ENCODE measurements at regions of chr1 and their contacts with region 1.

Region 1: DNA sequence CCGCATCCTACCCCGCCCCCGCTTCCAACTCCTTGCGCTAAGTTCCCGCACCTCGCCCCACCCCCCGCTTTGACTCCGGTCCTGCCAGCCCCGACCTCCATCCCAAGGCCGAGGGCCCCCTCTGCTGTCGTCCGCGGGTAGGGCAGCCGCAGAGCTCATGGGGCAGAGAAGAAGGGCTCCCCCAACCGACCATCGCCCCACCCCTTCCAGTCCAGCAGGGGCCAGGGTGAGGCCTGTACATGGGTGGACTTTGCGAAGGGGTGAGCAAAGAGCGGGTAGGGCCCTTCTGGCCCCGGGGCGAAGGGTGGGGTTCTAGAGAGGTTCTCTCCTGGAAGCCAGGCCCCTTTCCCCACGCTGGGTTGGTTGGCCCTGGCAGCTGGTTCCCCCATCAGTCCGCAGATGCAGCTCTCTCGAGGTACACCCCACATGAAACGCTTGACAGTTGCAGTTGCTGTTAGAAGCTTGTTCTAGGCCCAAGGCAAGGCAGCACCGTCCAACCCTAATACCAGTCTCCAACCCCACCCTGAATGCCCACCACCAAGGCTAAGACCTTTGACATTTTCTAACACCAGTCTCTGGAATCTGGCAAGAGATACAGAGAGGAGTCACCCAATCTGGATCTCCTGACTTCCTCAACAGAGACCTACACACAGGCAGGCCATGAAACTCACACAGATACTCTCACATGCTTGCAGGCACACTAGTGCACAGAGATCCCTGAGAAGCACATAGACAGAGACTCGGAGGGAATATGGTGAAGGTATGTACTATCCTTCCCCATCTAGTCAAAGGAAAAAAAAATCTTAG is 25.3 kb upstream of the ADGRB2 start:
- DNase-seq: peak; percentile 91
- H3K4me3 ChIP-seq: peak overlapping the region; percentile 4 to 78 (median 55)
- H3K27ac ChIP-seq: no peak overlapping the region
- H3K4me1 ChIP-seq: peaks cover 4% of the 10 kb centered on the region
- H3K27me3 ChIP-seq: no peaks in the 10 kb centered on the region
- CTCF ChIP-seq: peak; percentile 70 to 93
- POLR2A ChIP-seq: peak; percentile 32

Region 2: GRCh38 chr1:31394628-31395193 is 394.8 kb before region 1 on chr1:
- CTCF ChIA-PET with region 1: interaction called, 8 read pairs
- POLR2A ChIA-PET with region 1: no interaction called
- dilution Hi-C with region 1: no loop called
- intact Hi-C with region 1: loop called (anchors 10 kb)
- DNase-seq: peak; percentile 71
- H3K4me3 ChIP-seq: no peak overlapping the region
- H3K27ac ChIP-seq: no peak overlapping the region
- H3K4me1 ChIP-seq: peaks cover 5% of the 10 kb centered on the region
- H3K27me3 ChIP-seq: no peaks in the 10 kb centered on the region
- CTCF ChIP-seq: peak; percentile 90 to 96
- POLR2A ChIP-seq: no peak

Region 3: GRCh38 chr1:31587720-31588394 is 201.6 kb before region 1 on chr1:
- CTCF ChIA-PET with region 1: interaction called, 10 read pairs
- POLR2A ChIA-PET with region 1: no interaction called
- dilution Hi-C with region 1: no loop called
- intact Hi-C with region 1: loop called (anchors 2 kb)
- DNase-seq: peak; percentile 86
- H3K4me3 ChIP-seq: no peak overlapping the region
- H3K27ac ChIP-seq: peak overlapping the region; percentile 92
- H3K4me1 ChIP-seq: peaks cover 39% of the 10 kb centered on the region
- H3K27me3 ChIP-seq: no peaks in the 10 kb centered on the region
- CTCF ChIP-seq: peak; percentile 71 to 92
- POLR2A ChIP-seq: peak; percentile 81

Region 4: DNA sequence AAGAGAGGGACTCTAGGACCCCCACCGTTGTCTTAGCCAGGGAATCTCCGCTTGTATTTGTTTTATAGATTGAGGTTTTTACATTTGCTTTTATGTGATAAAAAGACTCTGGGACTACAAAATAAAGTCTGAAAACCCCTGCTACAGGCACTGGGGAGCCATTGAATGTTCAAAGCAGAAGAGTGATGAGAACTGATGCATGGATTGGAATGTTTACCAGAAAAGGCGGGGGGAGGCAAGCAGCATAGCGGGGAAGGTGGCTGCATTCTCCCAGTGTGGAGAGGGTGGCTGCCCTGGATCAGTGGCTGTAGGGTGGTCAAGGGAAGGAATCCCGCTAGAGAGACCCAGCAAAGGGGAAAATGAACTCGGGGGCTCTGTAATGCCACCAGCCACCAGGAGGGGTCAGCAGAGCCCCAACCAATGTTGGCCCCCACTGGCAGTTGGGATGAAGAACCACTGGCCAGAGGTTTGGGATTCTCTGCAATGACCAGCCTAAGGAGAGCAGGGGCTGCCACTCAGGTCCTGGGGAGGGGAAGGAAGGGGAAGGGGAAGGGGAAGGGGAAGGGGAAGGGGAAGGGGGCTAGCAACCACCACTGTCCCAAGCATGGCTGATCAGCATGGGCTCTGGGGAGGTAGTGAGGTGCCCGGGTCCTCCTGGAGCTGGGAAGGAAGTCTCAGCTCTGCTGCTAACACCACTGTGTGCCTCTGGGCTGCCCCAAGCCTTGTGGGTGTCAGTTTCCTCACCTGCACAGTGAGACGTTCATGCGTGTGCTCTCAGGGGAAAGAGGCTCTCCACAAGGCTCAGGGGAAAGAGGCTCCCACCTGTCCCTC is 125.6 kb before region 1 on chr1:
- CTCF ChIA-PET with region 1: interaction called, 76 read pairs
- POLR2A ChIA-PET with region 1: interaction called, 3 read pairs
- dilution Hi-C with region 1: no loop called
- intact Hi-C with region 1: loop called (anchors 1 kb)
- DNase-seq: peak; percentile 48
- H3K4me3 ChIP-seq: no peak overlapping the region
- H3K27ac ChIP-seq: no peak overlapping the region
- H3K4me1 ChIP-seq: no peaks in the 10 kb centered on the region
- H3K27me3 ChIP-seq: no peaks in the 10 kb centered on the region
- CTCF ChIP-seq: peak; percentile 86 to 90
- POLR2A ChIP-seq: no peak

Region 5: DNA sequence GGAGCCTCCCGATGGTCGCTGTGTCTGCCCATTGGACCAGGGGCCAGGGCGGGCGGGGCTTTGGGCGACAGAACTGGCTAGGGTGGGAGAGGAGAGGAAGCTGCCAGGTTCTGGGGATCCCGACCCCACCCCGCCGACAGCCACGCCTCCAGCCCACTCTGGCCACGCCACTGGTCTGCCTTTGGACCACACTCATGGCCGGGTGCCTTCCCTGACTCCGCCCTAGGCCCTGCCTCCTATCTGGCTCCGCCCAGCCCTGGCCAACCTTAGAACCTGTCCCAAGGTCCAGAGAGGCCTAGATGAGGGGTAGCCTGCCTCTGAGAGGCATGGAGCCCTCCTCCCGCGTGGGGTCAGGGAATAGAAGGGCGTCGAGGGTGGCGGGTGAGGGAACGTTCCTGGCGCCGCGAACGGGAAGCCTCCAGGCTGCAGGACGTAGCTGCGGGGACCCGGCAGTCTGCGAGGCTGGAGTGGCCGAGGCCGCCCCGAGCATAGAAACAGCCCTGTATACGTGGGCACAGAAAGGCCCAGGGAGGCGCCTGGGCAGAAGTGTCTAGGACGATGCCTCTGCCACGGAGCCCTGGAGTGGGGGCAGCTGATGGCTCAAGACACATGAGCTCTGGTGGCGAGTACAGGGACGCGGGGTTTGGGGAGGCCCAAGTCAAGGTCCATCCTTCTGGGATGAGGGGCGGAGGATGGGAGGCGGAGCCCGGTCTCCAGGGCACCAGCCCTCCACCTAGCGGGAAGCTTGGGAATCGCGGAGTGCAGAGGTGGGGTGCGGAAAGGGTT is 74.2 kb before region 1 on chr1:
- CTCF ChIA-PET with region 1: interaction called, 50 read pairs
- POLR2A ChIA-PET with region 1: no interaction called
- dilution Hi-C with region 1: no loop called
- intact Hi-C with region 1: loop called (anchors 1 kb)
- DNase-seq: peak; percentile 92
- H3K4me3 ChIP-seq: peak overlapping the region in 2 of 3 experiments; percentile 9 to 27
- H3K27ac ChIP-seq: peak overlapping the region; percentile 62
- H3K4me1 ChIP-seq: peaks cover 24% of the 10 kb centered on the region
- H3K27me3 ChIP-seq: peaks cover 0 to 18% of the 10 kb centered on the region in 2 experiments
- CTCF ChIP-seq: peak; percentile 86 to 96
- POLR2A ChIP-seq: no peak

Region 6: GRCh38 chr1:31769720-31770390 is 19.6 kb before region 1 on chr1:
- CTCF ChIA-PET with region 1: interaction called, 102 read pairs
- POLR2A ChIA-PET with region 1: no interaction called
- dilution Hi-C with region 1: no loop called
- intact Hi-C with region 1: loop called (anchors 1 kb)
- DNase-seq: no peak
- H3K4me3 ChIP-seq: no peak overlapping the region
- H3K27ac ChIP-seq: no peak overlapping the region
- H3K4me1 ChIP-seq: peaks cover 3% of the 10 kb centered on the region
- H3K27me3 ChIP-seq: peaks cover 41 to 44% of the 10 kb centered on the region in 2 experiments
- CTCF ChIP-seq: no peak
- POLR2A ChIP-seq: no peak

Region 7: GRCh38 chr1:31880890-31881687 is 91.6 kb after region 1 on chr1:
- CTCF ChIA-PET with region 1: no interaction called
- POLR2A ChIA-PET with region 1: no interaction called
- dilution Hi-C with region 1: no loop called
- intact Hi-C with region 1: no loop called
- DNase-seq: no peak
- H3K4me3 ChIP-seq: no peak overlapping the region
- H3K27ac ChIP-seq: no peak overlapping the region
- H3K4me1 ChIP-seq: no peaks in the 10 kb centered on the region
- H3K27me3 ChIP-seq: peaks cover 0 to 4% of the 10 kb centered on the region in 2 experiments
- CTCF ChIP-seq: no peak
- POLR2A ChIP-seq: no peak

Region 8: GRCh38 chr1:32100807-32101697 is 311.6 kb after region 1 on chr1:
- CTCF ChIA-PET with region 1: no interaction called
- POLR2A ChIA-PET with region 1: no interaction called
- dilution Hi-C with region 1: no loop called
- intact Hi-C with region 1: no loop called
- DNase-seq: no peak
- H3K4me3 ChIP-seq: no peak overlapping the region
- H3K27ac ChIP-seq: peak overlapping the region; percentile 40
- H3K4me1 ChIP-seq: peaks cover 13% of the 10 kb centered on the region
- H3K27me3 ChIP-seq: no peaks in the 10 kb centered on the region
- CTCF ChIP-seq: no peak
- POLR2A ChIP-seq: no peak

Measured in endothelial cell of umbilical vein (primary cell).